Activated T-helper 1 cell treated with anti-CD3 and anti-CD28 coated beads, Interleukin-12 subunit alpha, Interleukin-12 subunit beta, Interleukin-2, Interleukin-4 antibody, amounts not matched to agents 30 ng/mL and 10 ng/mL and 1 ng/mL, durations not matched to agents 14 hours and 24 hours and 36 hours (primary cell): ENCODE measurements at regions of chr15 and their contacts with region 1.

Region 1: DNA sequence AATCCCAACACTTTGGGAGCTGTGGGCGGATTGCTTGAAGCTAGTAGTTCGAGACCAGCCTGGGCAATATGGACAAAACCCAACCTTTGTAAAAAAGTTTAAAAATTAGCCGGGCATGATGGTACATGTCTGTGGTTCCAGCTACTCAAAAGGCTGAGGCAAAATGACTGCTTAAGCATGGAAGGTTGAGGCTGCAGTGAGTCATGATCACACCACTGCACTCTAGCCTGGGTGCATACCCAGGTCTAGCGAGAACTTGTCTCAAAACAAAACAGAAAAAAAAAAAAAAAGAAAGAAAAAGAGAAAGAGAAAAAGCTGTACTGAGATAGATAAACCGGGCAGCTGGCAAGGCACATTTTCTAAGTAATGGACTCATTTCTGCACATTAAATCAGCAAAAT is 10.6 kb downstream of the ARPP19 start:
- DNase-seq: peak; percentile 61
- H3K4me3 Mint-ChIP-seq: peak overlapping the region; percentile 64
- H3K27ac Mint-ChIP-seq: peak overlapping the region; percentile 87
- H3K4me1 Mint-ChIP-seq: peaks cover 72% of the 10 kb centered on the region
- H3K27me3 Mint-ChIP-seq: no peaks in the 10 kb centered on the region

Region 2: DNA sequence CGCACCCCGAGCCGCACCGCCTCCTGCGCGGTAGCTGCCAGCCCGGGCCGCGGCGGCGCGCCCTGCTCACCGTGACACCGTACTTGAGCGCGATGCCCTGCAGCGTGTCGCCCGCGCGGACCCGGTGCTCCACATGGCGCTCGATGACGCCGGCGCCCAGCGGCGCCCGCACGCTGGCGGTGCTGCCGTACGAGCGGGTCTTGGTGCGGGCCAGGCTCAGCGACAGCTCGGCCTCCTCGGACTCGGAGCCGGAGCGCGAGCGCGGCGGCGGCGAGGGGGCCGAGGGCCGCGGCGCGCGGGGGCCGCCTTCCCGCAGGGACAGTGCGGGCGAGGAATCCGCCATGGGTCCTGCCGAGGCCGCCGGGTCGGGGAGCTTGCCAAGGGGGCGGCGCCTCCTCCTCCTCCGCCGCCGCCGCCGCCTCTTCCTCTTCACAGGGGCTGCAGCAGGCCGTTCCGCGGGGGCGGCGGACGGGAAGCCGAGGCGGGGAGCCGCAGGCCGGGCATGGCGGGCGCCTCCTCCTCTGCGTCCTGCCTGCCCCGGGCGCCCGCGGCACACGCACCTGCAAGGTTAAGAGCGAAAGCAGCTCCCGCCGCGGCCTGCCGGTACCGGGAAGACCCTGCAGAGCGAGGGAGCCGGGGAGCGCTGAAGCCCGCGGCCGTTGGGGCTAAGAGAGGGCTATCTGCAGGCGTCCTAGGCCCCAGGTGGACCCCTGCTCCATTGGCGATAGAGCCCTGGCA is 820.7 kb before region 1 on chr15 and contains the start of gene LYSMD2:
- intact Hi-C with region 1: loop called (anchors 5 kb)
- DNase-seq: peak; percentile 64
- H3K4me3 Mint-ChIP-seq: peak within 1 kb of the TSS; percentile 84
- H3K27ac Mint-ChIP-seq: peak within 1 kb of the TSS; percentile 85
- H3K4me1 Mint-ChIP-seq: peaks cover 44% of the 10 kb centered on the region
- H3K27me3 Mint-ChIP-seq: peaks cover 2% of the 10 kb centered on the region
- total RNA-seq, gene LYSMD2: 16.0 and 16.5 TPM in 2 replicates

Region 3: DNA sequence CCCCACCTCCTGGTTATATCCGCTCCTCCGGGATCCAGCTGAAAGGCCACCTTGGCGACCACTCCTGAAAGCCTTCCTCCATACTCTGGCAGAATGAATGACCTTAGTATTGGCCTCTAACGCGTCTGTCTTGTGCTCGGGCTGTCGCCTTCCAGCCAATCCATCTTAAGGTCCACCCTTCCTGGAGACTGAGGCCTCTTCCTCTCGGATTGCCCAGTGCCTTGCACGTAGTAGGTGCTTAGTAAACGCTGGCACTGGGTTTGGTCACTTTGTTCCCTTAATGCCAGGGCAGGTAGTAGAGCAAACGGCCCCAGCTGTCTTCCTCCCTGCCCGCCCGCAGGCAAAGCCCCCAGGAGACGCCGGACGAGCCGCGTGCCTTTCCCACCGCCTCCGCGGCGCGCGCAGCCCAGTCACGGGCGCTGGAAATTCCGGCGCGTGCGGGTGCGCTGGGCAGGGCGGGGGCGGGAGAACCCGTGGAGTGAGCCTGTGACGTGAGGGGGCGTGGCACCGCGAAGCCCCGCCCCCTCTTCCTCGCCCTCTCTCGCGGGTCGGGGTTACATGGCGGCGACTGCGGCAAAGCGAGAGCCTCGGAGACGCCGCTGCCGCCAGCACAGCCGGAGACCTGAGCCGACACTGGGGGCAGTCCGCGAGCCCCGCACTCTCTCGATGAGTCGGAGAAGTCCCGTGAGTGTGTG is 539.4 kb before region 1 on chr15 and contains the start of gene MAPK6:
- intact Hi-C with region 1: loop called (anchors 1 kb)
- DNase-seq: peak; percentile 91
- H3K4me3 Mint-ChIP-seq: peak within 1 kb of the TSS; percentile 98
- H3K27ac Mint-ChIP-seq: peak within 1 kb of the TSS; percentile 99
- H3K4me1 Mint-ChIP-seq: peaks cover 46% of the 10 kb centered on the region
- H3K27me3 Mint-ChIP-seq: peaks cover 7% of the 10 kb centered on the region
- total RNA-seq, gene MAPK6: 57.3 and 57.9 TPM in 2 replicates

Region 4: DNA sequence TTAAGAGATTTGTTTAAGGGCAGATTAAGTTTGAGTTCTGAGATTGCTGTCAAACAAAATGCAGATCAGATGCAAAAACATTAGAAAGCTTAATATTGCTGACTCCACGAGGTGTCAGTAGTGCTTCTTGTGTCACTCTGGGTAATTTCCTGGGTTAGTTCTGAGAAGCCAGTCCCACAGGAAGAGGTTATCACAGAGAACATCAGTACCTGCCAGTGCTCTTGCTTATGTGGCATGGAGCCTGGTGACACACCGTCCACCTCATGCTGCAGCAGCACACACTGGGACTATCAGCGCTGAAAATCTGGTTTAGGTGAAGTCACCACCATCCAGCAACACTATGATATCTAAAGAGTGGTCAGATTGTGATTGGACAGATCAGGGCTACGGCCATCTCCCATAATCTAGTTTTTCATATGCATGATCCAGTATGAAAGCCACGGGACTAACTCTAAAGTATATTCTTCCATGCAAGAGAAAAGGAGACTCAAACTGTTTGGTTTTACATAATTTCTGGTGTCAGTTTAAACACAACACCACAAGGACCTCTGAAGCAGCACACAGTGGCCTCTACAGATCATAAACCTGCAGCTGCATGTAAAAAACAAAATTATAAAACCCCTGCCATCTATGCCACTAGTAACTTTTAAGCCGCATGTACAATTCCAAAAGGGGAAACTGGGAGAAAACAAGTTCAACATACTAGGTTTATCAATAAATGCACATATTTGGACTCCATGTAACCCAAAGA is 226.5 kb before region 1 on chr15:
- intact Hi-C with region 1: loop called (anchors 2 kb)
- DNase-seq: peak; percentile 58
- H3K4me3 Mint-ChIP-seq: peak overlapping the region; percentile 57
- H3K27ac Mint-ChIP-seq: peak overlapping the region; percentile 76
- H3K4me1 Mint-ChIP-seq: peaks cover 28% of the 10 kb centered on the region
- H3K27me3 Mint-ChIP-seq: no peaks in the 10 kb centered on the region

Region 5: DNA sequence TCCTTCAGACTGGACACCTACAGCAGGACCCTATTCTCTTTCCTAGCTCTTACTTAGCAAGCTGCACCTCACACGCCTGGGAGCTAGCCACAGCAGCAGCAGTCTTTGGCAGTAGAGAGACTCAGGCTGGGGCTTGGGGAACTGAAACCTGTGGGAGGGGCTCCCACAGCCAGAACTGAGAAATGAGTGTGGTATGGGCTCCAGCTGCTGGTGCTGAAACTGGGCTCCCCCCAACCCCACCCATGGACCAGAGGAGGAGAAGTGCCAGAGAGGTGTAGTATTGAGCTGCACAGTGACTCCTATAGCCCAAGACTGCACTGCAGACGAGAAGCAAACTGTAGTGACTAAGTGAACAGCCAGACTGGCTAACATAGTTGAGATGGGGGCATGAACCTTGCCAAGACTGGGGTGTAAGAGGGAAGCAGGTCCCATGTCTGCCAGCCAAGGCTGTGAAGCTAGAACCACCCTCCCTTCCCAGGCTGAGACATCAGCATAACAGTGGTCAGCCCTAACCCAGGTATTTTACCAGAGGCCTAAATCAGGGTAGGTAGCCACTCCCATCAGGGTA is 92.0 kb before region 1 on chr15:
- intact Hi-C with region 1: loop called (anchors 1 kb)
- DNase-seq: peak; percentile 44
- H3K4me3 Mint-ChIP-seq: no peak overlapping the region
- H3K27ac Mint-ChIP-seq: no peak overlapping the region
- H3K4me1 Mint-ChIP-seq: peaks cover 52% of the 10 kb centered on the region
- H3K27me3 Mint-ChIP-seq: no peaks in the 10 kb centered on the region

Region 6: GRCh38 chr15:52528991-52529926 is 28.9 kb before region 1 on chr15:
- intact Hi-C with region 1: loop called (anchors 1 kb)
- DNase-seq: peak; percentile 76
- H3K4me3 Mint-ChIP-seq: peak overlapping the region; percentile 77
- H3K27ac Mint-ChIP-seq: peak overlapping the region; percentile 75
- H3K4me1 Mint-ChIP-seq: peaks cover 29% of the 10 kb centered on the region
- H3K27me3 Mint-ChIP-seq: peaks cover 16% of the 10 kb centered on the region

Region 7: GRCh38 chr15:52735231-52736089 is 177.3 kb after region 1 on chr15:
- intact Hi-C with region 1: loop called (anchors 2 kb)
- DNase-seq: peak; percentile 68
- H3K4me3 Mint-ChIP-seq: no peak overlapping the region
- H3K27ac Mint-ChIP-seq: no peak overlapping the region
- H3K4me1 Mint-ChIP-seq: peaks cover 30% of the 10 kb centered on the region
- H3K27me3 Mint-ChIP-seq: peaks cover 8% of the 10 kb centered on the region